Gastrocnemius medialis (tissue), 4 donors: ENCODE measurements at regions of chr1 and their contacts with region 1.

Region 1: DNA sequence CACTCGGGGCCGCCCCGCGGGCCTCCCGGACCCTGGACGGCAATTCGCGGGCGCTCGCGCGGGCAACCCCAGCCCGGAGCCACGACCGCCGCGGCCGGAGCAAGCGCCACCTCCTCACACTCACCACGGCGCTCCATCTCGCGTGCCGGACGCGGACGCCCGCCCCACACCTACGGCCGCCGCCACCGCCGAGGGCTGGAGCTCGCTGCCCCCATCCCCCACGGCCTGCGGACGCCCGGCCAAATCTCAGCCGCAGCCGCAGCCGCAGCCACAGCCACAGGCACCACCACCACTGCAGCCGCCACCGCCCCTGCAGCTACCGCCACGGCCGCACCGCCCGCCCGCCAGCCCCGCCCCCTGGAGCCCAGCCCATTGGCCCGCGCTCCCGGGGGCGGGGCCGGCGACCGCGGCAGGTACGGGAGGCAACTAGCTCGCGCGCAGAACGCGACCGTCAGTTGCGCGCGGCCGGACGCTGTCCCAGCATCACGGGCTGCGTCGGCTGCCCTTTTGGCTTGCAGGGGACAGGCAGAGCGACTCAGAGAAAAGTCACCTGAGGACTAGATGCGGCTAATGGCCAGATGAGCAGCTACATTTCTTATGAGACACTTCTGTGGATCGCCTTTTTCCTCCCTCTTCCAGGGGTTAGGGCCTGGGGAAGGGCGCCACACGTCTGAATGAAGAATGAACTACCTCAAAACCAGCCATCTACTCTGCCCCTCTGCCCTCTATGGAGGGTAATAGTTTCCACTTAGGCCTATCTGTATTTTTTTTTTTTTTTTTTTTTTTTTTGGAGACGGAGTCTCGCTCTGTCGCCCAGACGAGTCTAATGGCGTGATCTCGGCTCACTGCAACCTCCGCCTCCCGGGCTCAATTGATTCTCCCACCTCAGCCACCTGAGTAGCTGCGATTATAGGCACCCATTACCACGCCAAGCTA is at the start of gene ARHGAP29:
- DNase-seq: peak; percentile 60 to 79
- ATAC-seq: peak; percentile 85 to 86
- H3K4me3 ChIP-seq: peak within 1 kb of the TSS; percentile 78 to 86 (median 80)
- H3K27ac ChIP-seq: peak within 1 kb of the TSS; percentile 86 to 93 (median 92)
- H3K4me1 ChIP-seq: peaks cover 26 to 32% of the 10 kb centered on the region in 2 donors
- H3K27me3 ChIP-seq: no peaks in the 10 kb centered on the region
- CTCF ChIP-seq: peak in 1 of 5 experiments; percentile 19
- POLR2A ChIP-seq: peak; percentile 91 to 93
- total RNA-seq, gene ARHGAP29: 10.0 to 13.5 (median 11.6) TPM

Region 2: GRCh38 chr1:93615582-93616150 is 621.9 kb before region 1 on chr1:
- in situ Hi-C with region 1: no loop called
- intact Hi-C with region 1: loop called (anchors 5 kb)
- DNase-seq: no peak
- ATAC-seq: no peak
- H3K4me3 ChIP-seq: no peak overlapping the region
- H3K27ac ChIP-seq: peak overlapping the region; percentile 84 to 90 (median 87)
- H3K4me1 ChIP-seq: peaks cover 58 to 71% of the 10 kb centered on the region in 2 donors
- H3K27me3 ChIP-seq: no peaks in the 10 kb centered on the region
- CTCF ChIP-seq: no peak
- POLR2A ChIP-seq: no peak

Region 3: GRCh38 chr1:94045465-94046056 is 192.0 kb before region 1 on chr1:
- in situ Hi-C with region 1: no loop called
- intact Hi-C with region 1: loop called (anchors 2 kb)
- DNase-seq: peak; percentile 70 to 83
- ATAC-seq: peak; percentile 72 to 83
- H3K4me3 ChIP-seq: peak overlapping the region in 1 of 4 donors; percentile 28
- H3K27ac ChIP-seq: peak overlapping the region; percentile 81 to 85 (median 82)
- H3K4me1 ChIP-seq: peaks cover 19 to 33% of the 10 kb centered on the region in 2 donors
- H3K27me3 ChIP-seq: no peaks in the 10 kb centered on the region
- CTCF ChIP-seq: peak; percentile 45 to 70 (median 63)
- POLR2A ChIP-seq: peak in 1 of 2 donors; percentile 11

Region 4: DNA sequence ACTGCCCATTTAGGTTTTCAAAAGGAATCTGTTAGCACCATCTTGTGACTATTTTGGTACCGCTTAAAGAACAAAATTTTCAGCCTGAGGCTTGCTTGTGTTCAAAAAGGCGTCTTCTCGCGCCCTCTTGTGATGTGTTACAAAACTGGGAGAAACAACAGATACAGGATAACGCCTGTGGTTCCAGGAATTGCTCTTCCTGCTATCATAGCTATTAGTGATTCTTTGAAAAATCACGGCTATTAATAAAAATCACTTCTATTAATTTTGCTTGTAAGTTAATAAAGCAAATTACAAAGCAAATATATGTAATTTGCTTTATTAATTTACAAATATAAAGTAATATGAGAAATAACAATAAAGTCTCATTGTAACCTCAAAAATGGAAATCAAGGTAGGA is 98.4 kb after region 1 on chr1:
- in situ Hi-C with region 1: no loop called
- intact Hi-C with region 1: loop called (anchors 2 kb)
- DNase-seq: peak; percentile 59 to 62
- ATAC-seq: peak; percentile 97 to 99
- H3K4me3 ChIP-seq: no peak overlapping the region
- H3K27ac ChIP-seq: peak overlapping the region in 1 of 4 donors; percentile 63
- H3K4me1 ChIP-seq: peaks cover 0 to 8% of the 10 kb centered on the region in 2 donors
- H3K27me3 ChIP-seq: no peaks in the 10 kb centered on the region
- CTCF ChIP-seq: peak; percentile 68 to 85 (median 82)
- POLR2A ChIP-seq: no peak